Posterior vena cava (tissue), 2 donors: ENCODE measurements at regions of chr3 and their contacts with region 1.

Region 1: DNA sequence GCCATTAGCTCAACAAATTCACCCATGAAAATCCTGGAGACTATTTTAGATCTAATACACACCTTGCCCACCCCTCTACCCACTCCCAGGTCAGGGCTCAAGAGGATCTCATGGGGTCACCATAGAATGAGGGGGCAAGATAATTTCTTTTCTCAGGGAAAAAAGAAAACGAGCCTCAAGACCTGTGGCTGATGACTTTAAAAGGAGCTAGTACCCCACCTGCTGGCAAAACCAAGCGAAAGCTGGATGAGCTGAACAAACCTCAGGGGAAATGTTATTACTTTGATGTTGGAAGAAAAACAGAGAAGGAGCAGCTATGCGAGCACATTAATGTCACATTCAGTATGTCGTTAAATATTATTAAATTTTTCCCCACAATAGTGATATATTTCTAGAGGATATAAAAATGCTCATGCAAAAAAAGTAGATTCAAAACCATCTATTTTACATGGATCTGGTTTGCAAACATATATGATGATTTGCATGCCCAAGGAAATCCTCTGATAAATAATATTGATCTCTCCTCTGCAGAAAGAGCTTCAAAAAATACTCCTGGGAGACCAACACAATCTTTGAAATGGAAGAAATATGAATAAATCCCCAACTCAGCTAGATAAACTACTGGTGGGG is 37.7 kb downstream of the PLD1 start:
- DNase-seq: no peak

Region 2: DNA sequence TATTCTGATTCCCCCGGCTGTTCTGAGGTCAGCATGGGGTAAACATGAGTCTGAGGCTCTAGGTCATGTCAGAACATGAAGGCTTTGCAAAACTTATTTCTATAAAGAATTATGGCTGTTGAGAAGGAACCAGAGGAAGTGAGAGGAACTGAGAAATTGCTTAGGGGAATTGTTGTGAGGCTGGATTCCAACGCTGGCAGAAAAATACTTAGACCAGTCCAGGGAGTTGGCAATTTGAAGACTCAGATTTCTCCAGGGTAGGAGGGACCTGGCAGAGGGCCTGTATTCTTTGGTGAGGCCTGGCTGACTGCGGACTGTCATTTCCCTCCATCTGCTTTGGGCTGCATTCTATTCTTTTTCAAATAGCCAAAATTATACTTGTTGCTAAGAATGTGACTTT is 117.7 kb before region 1 on chr3:
- intact Hi-C with region 1: loop called (anchors 5 kb)
- DNase-seq: no peak

Region 3: GRCh38 chr3:171676601-171677175 is 95.9 kb before region 1 on chr3:
- intact Hi-C with region 1: no loop called
- DNase-seq: no peak